GM12878 (cell line): ENCODE measurements at regions of chr1 and their contacts with region 1.

Region 1: DNA sequence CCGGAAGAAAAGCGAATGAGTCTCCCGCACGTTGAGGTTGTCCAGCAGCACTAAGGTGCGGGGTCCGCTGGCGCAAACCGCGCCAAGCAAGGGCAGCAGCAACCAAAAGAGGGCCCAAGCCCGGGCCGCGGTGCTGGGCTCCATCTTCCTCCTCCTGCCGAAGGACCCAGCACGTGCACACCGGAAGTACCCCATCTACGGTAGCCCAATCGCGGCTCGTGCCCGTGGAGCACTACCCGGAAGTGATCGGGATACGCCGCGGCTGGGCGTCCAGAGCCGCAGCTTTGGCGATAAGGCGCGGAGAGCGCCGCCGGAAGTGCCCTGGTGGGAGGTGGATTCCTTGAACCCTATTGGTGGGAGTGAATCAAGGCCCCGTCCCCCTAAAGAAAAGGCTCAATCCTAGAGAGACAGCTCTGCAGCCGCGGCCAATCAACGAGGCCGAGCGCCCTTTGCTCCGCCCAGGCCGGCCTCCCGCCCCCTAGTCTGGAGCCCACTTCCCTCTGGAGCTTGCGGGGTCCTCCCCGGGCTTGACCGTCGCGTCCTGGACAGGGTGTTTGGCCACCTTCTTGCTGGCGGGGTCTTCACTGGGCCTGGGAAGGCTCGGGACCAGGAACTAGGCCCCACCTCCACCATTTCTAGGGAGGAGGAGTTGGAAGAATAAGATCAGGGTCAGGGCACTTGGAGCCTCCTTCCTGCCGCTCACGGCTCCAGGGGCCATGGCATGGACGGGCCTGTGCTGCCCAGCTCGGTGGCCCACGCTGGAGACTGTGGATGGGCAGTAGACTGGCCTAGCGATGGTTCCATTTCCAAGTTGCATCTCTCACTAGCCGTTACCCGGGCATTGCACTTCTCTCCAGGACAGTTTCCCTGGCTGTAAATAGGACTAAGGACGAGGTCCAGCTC is at the start of gene DDOST:
- DNase-seq: peak; percentile 94
- ATAC-seq: peak; percentile 98
- H3K4me3 ChIP-seq: peak within 1 kb of the TSS; percentile 81
- H3K27ac ChIP-seq: peak within 1 kb of the TSS; percentile 88
- H3K4me1 ChIP-seq: 0 out of 2 replicates have a peak, but pooled peaks cover 10% of the 10 kb centered on the region
- H3K27me3 ChIP-seq: no peaks in the 10 kb centered on the region
- CTCF ChIP-seq: peak; percentile 41 to 52 (median 45)
- EP300 ChIP-seq: no peak
- POLR2A ChIP-seq: peak; percentile 85
- RAD21 ChIP-seq: no peak
- polyA plus RNA-seq, gene DDOST: 100 to 159 TPM

Region 2: DNA sequence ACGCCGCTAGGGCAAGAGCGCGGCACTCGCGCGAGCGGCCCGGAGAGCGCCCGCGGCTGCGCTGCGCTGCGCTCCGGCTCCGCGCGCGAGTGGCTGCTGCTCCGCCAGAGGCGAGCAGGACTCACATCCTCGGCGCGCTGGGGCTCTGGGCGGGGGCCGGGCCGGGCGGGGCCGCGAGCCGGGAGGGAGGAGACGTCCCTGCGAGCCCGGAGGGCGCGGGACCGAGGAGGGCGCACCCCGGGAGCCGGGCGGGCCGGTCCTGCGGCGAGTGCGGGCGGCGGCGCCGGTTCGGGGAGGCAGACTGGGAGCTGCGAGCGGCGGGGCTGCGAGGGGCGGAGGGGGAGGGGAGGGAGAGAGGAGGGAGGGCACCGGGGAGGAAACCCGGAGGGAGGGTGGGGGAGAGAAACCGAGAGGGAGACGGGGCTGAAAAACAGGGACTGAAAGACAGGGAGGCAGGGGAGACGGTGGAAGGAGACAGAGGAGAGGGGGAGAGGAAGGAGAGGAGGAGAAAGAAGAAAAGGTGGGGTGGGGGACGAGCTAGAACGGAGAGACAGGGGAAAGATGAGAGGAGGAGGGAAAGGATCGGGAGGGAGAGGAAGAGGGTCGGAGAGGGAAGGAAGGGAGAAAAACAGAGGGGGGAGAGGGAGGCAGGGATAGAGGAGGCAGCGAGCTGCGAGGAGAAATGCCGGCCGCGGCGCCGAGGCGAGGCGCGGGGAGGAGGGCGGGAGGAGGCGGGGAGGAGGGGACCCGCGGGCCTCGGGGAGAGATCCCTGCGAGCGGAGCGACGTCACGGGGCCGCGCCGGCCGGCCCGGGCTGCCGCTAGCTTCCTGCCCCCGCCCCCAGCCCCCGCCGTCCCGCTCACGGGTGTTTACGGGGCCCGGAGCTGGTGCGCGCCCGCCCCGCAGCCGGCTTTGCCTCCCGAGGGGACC is 175.7 kb before region 1 on chr1 and contains the start of gene CAMK2N1:
- CTCF ChIA-PET with region 1: no interaction called
- POLR2A ChIA-PET with region 1: no interaction called
- RAD21 ChIA-PET with region 1: no interaction called
- SMC1A ChIA-PET with region 1: no interaction called
- in situ Hi-C with region 1: no loop called
- intact Hi-C with region 1: no loop called
- DNase-seq: no peak
- ATAC-seq: no peak
- H3K4me3 ChIP-seq: no peak within 1 kb of the TSS
- H3K27ac ChIP-seq: no peak within 1 kb of the TSS
- H3K4me1 ChIP-seq: no peaks in the 10 kb centered on the region
- H3K27me3 ChIP-seq: peaks cover 8 to 26% of the 10 kb centered on the region in 2 experiments
- CTCF ChIP-seq: no peak
- EP300 ChIP-seq: no peak
- POLR2A ChIP-seq: no peak
- RAD21 ChIP-seq: no peak
- polyA plus RNA-seq, gene CAMK2N1: not detected

Region 3: GRCh38 chr1:20786253-20787028 is 125.0 kb after region 1 on chr1:
- CTCF ChIA-PET with region 1: no interaction called
- POLR2A ChIA-PET with region 1: interaction called, 3 read pairs
- RAD21 ChIA-PET with region 1: no interaction called
- SMC1A ChIA-PET with region 1: no interaction called
- in situ Hi-C with region 1: no loop called
- intact Hi-C with region 1: loop called (anchors 2 kb)
- DNase-seq: peak; percentile 82
- ATAC-seq: peak; percentile 91
- H3K4me3 ChIP-seq: peak overlapping the region; percentile 79
- H3K27ac ChIP-seq: peak overlapping the region; percentile 90
- H3K4me1 ChIP-seq: peaks cover 9% of the 10 kb centered on the region; the same call in 1 of the 2 replicates
- H3K27me3 ChIP-seq: no peaks in the 10 kb centered on the region
- CTCF ChIP-seq: 0 out of 6 replicates have a peak, but pooled peaks of 1 of the 3 experiments have one; percentile 4
- EP300 ChIP-seq: no peak; a peak in 1 of 4 replicates
- POLR2A ChIP-seq: peak; percentile 92
- RAD21 ChIP-seq: no peak